Mucosa of descending colon (tissue), 3 donors: ENCODE measurements at regions of chr11 and their contacts with region 1.

Region 1: DNA sequence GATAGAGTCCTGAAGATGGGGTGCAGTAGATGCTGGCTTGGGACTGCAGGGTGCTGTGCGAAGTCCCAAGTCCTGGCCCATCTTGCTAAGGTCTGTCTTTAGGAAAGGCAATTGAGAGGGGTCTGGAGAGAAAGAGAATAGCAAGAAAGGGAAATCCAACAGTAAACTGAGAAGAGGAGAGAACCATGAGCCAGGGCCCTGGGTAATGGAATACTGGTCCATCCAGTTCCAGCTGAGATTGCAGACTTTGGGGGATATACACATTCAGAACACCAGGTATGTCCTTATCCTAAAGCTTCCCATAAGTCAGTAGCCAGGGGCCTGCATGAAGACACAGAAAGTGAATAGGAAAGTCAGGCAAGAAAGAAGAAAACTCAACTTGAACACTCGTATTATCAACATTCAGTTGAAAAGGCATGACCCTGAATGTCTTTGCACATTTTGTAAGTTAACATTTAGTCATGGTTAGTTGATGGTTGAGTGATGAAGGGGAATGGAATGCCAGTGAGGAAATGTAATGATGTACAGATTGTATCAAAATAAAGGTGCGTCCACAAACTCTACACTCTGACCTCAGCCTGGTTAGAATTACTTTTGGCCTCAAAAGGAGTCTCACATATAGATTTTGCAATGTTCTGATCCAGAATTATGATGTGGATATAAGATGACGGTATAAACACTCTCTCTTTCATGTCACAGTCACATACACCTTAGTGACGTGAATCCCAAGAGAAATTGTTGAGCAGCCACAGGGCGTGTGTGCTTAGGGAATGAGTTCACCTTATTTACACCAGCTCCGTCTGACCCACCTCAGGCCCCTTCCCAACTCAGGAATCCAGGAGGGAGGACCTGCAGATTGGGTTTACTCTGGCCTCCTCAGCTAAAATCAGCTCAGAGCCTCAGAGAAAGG is 100.3 kb downstream of the RDX start:
- DNase-seq: no peak
- ATAC-seq: peak; percentile 65
- H3K4me3 ChIP-seq: no peak overlapping the region
- H3K4me1 ChIP-seq: no peaks in the 10 kb centered on the region
- CTCF ChIP-seq: no peak

Region 2: GRCh38 chr11:109946322-109946846 is 249.7 kb before region 1 on chr11:
- intact Hi-C with region 1: loop called in 1 of 2 experiments (anchors 10 kb)
- DNase-seq: peak; percentile 71 to 94 (median 82)
- ATAC-seq: peak; percentile 100
- H3K4me3 ChIP-seq: no peak overlapping the region
- H3K4me1 ChIP-seq: peaks cover 7% of the 10 kb centered on the region
- CTCF ChIP-seq: peak; percentile 81

Region 3: GRCh38 chr11:110130642-110131238 is 65.4 kb before region 1 on chr11:
- intact Hi-C with region 1: no loop called
- DNase-seq: peak in 1 of 3 donors; percentile 28
- ATAC-seq: peak; percentile 96
- H3K4me3 ChIP-seq: no peak overlapping the region
- H3K4me1 ChIP-seq: no peaks in the 10 kb centered on the region
- CTCF ChIP-seq: no peak

Region 4: GRCh38 chr11:110376711-110377324 is 180.7 kb after region 1 on chr11:
- intact Hi-C with region 1: loop called (anchors 5 to 10 kb)
- DNase-seq: peak in 2 of 3 donors; percentile 42 to 82
- ATAC-seq: peak; percentile 89
- H3K4me3 ChIP-seq: no peak overlapping the region
- H3K4me1 ChIP-seq: peaks cover 6% of the 10 kb centered on the region
- CTCF ChIP-seq: peak; percentile 54

Region 5: DNA sequence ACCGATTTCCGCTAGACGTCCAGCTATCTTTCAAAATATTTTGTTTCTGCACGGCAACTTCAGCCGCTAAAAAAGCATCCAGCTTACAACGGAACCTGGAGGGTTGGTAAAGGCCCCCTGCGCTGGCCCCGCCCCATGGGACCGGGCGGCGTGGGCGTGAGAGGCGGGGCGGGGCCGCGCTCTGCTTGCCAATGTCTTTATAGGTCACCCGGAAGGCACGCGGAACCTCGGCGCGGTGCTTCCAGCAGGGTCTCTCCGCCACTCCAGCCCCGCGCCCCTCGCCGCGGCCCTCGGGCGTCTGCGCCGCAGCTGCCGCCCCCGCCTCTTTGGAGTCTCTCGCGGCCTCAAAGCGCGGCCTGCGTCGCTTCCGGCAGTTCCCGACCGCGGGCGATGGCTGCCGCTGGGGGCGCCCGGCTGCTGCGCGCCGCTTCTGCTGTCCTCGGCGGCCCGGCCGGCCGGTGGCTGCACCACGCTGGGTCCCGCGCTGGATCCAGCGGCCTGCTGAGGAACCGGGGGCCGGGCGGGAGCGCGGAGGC is 233.7 kb after region 1 on chr11 and contains the start of gene FDX1:
- intact Hi-C with region 1: loop called in 1 of 2 experiments (anchors 5 kb)
- DNase-seq: peak; percentile 87 to 90 (median 87)
- ATAC-seq: peak; percentile 90
- H3K4me3 ChIP-seq: peak within 1 kb of the TSS; percentile 87
- H3K4me1 ChIP-seq: peaks cover 17% of the 10 kb centered on the region
- CTCF ChIP-seq: peak; percentile 63
- total RNA-seq, gene FDX1: 18.7 to 24.3 (median 19.0) TPM